Testis (tissue), 5 donors: ENCODE measurements at regions of chr19 and their contacts with region 1.

Region 1: GRCh38 chr19:50759886-50760285 is 10.4 kb upstream of the GPR32 start:
- DNase-seq: no peak
- H3K4me3 ChIP-seq: no peak overlapping the region
- H3K27ac ChIP-seq: no peak overlapping the region
- H3K4me1 ChIP-seq: no peaks in the 10 kb centered on the region
- H3K27me3 ChIP-seq: no peaks in the 10 kb centered on the region
- CTCF ChIP-seq: no peak
- POLR2A ChIP-seq: no peak

Region 2: GRCh38 chr19:50349277-50350057 is 410.4 kb before region 1 on chr19:
- intact Hi-C with region 1: loop called (anchors 5 kb)
- DNase-seq: no peak
- H3K4me3 ChIP-seq: no peak overlapping the region
- H3K27ac ChIP-seq: no peak overlapping the region
- H3K4me1 ChIP-seq: no peaks in the 10 kb centered on the region
- H3K27me3 ChIP-seq: no peaks in the 10 kb centered on the region
- CTCF ChIP-seq: no peak
- POLR2A ChIP-seq: no peak